Heart left ventricle (tissue), 16 donors: ENCODE measurements at regions of chr2 and their contacts with region 1.

Region 1: DNA sequence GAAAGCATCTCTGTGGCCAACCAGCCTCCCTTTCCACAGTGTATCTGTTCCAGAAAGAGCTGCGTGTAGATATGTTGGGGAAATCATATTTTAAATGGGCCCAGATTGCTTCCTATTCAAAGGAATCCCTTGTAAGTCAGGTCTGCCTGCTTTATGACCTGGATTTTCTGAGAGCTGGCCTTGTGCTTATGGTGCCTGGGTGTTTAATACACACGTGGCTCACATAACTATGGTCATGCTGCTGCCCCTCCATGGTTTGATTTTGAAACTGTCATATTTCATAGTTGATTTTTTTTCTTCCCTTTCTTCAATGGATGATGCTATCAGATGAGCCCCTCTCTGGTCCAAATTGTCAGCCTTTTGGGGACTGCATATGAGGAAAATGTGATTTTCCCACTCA is 111.5 kb upstream of the CNGA3 start:
- DNase-seq: no peak
- ATAC-seq: no peak
- H3K4me3 ChIP-seq: no peak overlapping the region
- H3K27ac ChIP-seq: no peak overlapping the region
- H3K4me1 ChIP-seq: peaks cover 0 to 13% (median 0%) of the 10 kb centered on the region in 12 donors
- H3K27me3 ChIP-seq: peaks cover 0 to 5% (median 0%) of the 10 kb centered on the region in 9 donors
- CTCF ChIP-seq: peak in 3 of 12 donors; percentile 14 to 18 (median 15)
- POLR2A ChIP-seq: no peak

Region 2: DNA sequence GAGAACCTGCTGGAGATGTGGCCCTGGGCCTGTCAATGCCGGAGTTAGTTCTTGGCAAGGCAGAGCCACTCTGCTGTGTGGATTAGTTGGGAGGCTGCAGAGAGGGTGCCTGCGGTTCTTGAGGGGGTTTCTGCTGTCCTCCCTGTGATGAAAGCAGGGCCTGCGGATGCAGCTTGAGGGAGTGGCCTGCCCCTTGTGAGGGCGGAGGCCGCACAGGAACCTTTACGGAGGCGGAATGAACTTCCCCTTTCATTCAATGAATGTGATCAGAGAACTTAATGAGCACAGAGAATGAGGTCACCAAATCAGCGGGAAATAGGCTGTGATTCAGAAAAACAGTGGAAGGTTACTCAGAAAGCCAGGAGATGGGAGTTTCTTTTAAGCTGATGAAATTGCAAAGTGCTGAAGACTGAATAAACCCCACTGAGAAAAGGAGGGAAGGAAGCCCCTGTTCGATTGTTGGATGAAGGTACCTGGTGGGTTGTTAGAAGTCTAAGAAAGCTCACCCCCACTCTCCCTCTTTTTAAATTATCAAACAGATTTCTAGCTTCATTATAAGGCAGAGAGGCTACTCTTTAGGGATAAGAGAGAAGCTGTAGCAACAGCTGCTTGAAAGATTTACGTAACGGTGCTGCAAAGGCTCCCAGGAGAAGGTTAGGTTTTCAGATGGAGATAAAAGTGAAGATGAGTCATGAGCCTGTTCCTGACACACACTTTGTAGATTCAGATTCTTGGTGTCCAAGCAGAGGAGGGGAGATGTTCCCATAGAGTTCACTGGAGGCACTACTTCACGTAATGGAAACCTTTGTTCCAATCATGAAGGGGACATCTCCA is 100.4 kb before region 1 on chr2:
- intact Hi-C with region 1: loop called in 1 of 10 experiments (anchors 10 kb)
- DNase-seq: peak in 3 of 5 donors; percentile 47 to 56 (median 48)
- ATAC-seq: peak; percentile 56 to 95 (median 82)
- H3K4me3 ChIP-seq: no peak overlapping the region
- H3K27ac ChIP-seq: peak overlapping the region in 7 of 12 donors; percentile 24 to 57 (median 49)
- H3K4me1 ChIP-seq: peaks cover 0 to 17% (median 2%) of the 10 kb centered on the region in 12 donors
- H3K27me3 ChIP-seq: no peaks in the 10 kb centered on the region
- CTCF ChIP-seq: no peak
- POLR2A ChIP-seq: no peak

Region 3: GRCh38 chr2:98201576-98201975 is 33.2 kb before region 1 on chr2:
- intact Hi-C with region 1: no loop called
- DNase-seq: no peak
- ATAC-seq: no peak
- H3K4me3 ChIP-seq: no peak overlapping the region
- H3K27ac ChIP-seq: no peak overlapping the region
- H3K4me1 ChIP-seq: peaks cover 0 to 3% (median 0%) of the 10 kb centered on the region in 12 donors
- H3K27me3 ChIP-seq: no peaks in the 10 kb centered on the region
- CTCF ChIP-seq: no peak
- POLR2A ChIP-seq: no peak